Activated B cell treated with CpG ODN at 0.5 μM for 24 hours (primary cell): ENCODE measurements at regions of chr6 and their contacts with region 1.

Region 1: DNA sequence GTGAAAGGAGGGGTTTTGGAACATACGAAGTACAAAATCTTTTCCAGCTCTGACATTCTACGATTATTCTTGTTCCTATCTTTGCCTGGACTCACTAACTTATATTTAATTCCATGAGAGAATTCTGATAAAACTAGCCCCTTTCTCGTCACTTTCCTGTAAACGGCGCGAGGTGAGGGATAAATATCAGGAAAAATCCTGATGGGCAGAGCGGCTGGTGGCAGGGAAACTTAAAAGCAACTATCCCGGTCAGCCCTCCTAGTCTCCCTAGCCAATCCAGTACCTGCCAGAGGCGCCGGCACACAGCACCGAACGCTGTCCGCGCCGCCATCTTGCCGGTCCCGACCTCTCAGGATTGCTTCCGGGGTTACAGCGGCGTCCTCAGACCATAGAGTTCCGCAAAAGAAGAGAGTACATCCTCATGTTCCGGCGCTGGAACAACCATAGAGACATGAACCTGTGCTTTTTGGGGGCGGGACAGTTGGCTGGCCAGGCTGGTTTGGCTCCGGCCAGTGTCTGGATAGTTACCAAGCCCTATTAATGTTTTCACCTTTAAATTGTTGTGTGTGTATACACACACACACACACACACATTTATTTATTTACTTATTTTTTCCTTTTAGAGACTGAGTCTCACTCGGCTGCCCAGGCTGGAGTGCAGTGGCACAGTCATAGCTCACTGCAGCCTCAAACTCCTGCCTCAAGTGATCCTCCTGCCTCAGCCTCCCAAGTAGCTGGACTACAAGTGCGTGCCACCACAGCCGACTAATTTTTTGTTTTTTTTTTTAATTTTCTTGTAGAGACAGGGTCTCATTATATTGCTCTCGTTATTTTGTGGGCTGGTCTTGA is at the start of gene MRPS10:
- DNase-seq: peak; percentile 76
- ATAC-seq: peak; percentile 99
- H3K4me3 Mint-ChIP-seq: peak within 1 kb of the TSS; percentile 99
- H3K27ac Mint-ChIP-seq: peak within 1 kb of the TSS; percentile 95
- H3K4me1 Mint-ChIP-seq: peaks cover 30% of the 10 kb centered on the region
- H3K27me3 Mint-ChIP-seq: no peaks in the 10 kb centered on the region
- CTCF ChIP-seq: no peak
- total RNA-seq, gene MRPS10: 35.7 and 37.0 TPM in 2 replicates

Region 2: GRCh38 chr6:41705996-41706835 is 511.5 kb before region 1 on chr6:
- CTCF ChIA-PET with region 1: interaction called, 3 read pairs
- POLR2A ChIA-PET with region 1: interaction called, 4 read pairs
- intact Hi-C with region 1: loop called (anchors 10 kb)
- DNase-seq: peak; percentile 83
- ATAC-seq: peak; percentile 81
- H3K4me3 Mint-ChIP-seq: peak overlapping the region; percentile 89
- H3K27ac Mint-ChIP-seq: peak overlapping the region; percentile 97
- H3K4me1 Mint-ChIP-seq: peaks cover 99% of the 10 kb centered on the region
- H3K27me3 Mint-ChIP-seq: no peaks in the 10 kb centered on the region
- CTCF ChIP-seq: peak; percentile 54

Region 3: DNA sequence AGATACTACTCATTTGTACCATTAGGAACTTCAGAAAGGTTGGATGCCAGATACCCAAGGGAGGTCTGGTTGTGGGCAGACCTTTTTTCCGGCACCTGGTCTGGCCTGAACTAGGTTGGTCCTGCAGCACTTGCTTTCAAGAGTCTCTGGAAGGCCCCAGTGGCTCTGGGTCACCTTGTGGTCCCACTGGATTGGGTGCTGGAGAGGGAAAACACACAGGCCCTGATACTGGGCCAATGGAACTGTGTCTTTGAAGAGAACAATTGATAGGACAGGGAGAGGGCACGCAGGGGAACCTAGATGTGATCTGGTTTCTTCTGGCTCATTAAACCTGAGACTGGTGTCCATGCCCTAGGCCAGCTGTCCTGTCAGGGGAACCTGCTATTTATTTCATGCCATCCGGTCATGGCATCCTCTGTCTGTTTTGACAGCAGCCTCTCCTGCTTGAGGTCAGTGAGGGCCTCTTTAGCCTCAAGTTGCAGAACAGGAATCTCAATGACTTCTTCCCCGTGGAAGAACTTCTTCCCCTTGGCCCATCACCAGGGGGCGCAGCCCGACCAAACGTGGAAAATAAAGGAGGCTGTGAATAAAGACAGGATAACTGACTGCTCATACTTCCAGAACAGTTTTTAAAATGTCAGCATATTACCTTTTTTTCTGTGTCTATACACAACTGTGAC is 142.4 kb before region 1 on chr6:
- CTCF ChIA-PET with region 1: interaction called, 6 read pairs
- POLR2A ChIA-PET with region 1: no interaction called
- intact Hi-C with region 1: loop called (anchors 1 kb)
- DNase-seq: peak; percentile 46
- ATAC-seq: no peak
- H3K4me3 Mint-ChIP-seq: no peak overlapping the region
- H3K27ac Mint-ChIP-seq: no peak overlapping the region
- H3K4me1 Mint-ChIP-seq: no peaks in the 10 kb centered on the region
- H3K27me3 Mint-ChIP-seq: no peaks in the 10 kb centered on the region
- CTCF ChIP-seq: no peak

Region 4: GRCh38 chr6:42104095-42104806 is 113.5 kb before region 1 on chr6:
- CTCF ChIA-PET with region 1: interaction called, 6 read pairs
- POLR2A ChIA-PET with region 1: no interaction called
- intact Hi-C with region 1: loop called (anchors 1 kb)
- DNase-seq: peak; percentile 56
- ATAC-seq: peak; percentile 84
- H3K4me3 Mint-ChIP-seq: peak overlapping the region; percentile 72
- H3K27ac Mint-ChIP-seq: no peak overlapping the region
- H3K4me1 Mint-ChIP-seq: peaks cover 5% of the 10 kb centered on the region
- H3K27me3 Mint-ChIP-seq: peaks cover 8% of the 10 kb centered on the region
- CTCF ChIP-seq: no peak

Region 5: DNA sequence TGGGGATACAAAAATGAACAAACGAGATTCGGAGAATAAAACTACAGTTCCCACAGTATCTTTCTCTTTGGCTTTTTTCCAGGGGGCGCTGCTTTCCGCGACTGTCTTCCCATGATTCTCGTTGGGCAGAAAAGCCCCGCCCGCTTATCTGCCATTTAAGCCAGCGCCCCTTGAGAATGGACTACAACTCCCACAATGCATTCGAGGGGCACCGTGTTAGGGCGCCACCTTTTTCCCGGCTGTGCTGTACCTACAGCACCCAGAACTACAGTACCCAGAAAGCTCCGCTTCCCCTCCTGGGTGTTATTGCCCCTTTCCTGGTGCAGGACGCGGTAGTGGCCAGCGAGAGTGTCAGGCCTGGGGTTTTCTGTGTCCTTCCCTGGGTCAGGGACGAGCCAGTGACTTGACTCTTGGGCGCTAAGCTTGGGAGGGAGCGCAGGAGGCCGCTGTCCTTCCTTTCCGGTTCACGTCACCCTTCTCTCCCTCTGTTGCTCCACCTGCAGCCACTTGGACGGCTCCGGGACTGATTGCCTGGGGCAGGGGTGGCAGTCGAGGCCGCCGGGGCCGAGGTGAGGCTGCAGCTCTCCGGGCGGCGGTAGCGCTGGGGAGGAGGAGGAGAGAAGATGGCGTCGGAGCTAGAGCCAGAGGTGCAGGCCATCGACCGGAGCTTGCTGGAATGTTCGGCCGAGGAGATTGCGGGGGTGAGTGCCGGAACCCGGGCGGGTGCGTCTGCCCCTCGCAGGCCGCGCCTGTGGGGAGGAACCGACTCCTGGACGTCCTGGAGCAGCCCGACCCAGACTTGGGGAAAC is 346.2 kb after region 1 on chr6 and contains the start of gene UBR2:
- CTCF ChIA-PET with region 1: no interaction called
- POLR2A ChIA-PET with region 1: interaction called, 6 read pairs
- intact Hi-C with region 1: loop called (anchors 1 kb)
- DNase-seq: peak; percentile 73
- ATAC-seq: peak; percentile 96
- H3K4me3 Mint-ChIP-seq: peak within 1 kb of the TSS; percentile 92
- H3K27ac Mint-ChIP-seq: peak within 1 kb of the TSS; percentile 92
- H3K4me1 Mint-ChIP-seq: peaks cover 43% of the 10 kb centered on the region
- H3K27me3 Mint-ChIP-seq: no peaks in the 10 kb centered on the region
- CTCF ChIP-seq: no peak
- total RNA-seq, gene UBR2: 34.3 and 40.8 TPM in 2 replicates